ENCODE measurements at regions of chr6 and their contacts with region 1.

Region 1: DNA sequence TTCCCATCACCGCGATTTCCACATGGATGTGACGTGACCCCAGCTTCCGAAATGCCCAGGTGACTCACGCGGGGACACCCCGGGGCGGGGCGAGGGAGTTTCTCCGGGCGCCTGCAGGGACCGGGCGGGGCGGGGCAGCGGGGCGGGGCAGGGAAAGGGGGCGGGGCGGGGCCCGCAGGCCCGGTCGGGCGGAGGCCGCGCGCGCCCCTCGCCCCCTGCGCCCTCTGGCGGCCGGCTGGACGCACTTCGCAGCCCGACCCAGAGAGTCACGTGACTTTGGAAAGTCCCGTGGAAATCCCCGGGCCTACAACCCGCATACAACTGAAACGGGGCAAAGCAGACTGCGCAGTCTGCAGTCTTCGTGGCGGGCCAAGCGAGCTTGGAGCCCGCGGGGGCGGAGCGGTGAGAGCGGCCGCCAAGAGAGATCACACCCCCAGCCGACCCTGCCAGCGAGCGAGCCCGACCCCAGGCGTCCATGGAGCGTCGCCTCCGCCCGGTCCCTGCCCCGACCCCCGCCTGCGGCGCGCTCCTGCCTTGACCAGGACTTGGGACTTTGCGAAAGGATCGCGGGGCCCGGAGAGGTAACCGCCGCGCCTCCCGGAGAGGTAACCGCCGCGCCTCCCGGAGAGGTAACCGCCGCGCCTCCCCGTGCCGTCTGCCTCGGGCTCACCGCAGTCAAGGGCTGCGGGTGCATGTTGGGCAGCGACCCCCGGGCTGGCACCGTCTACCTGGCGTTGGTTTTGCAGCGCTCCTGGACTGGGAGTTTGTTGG is at the start of gene TNFAIP3:
- DNase-seq: peak; percentile 79 to 97
- H3K4me3 ChIP-seq: peak within 1 kb of the TSS; percentile 90 to 93
- H3K27ac ChIP-seq: peak within 1 kb of the TSS; percentile 82 to 89
- H3K4me1 ChIP-seq: peaks cover 0 to 13% of the 10 kb centered on the region in 2 donors
- H3K27me3 ChIP-seq: no peaks in the 10 kb centered on the region
- CTCF ChIP-seq: peak; percentile 48 to 90 (median 59)
- total RNA-seq, gene TNFAIP3: 24.5 TPM

Region 2: GRCh38 chr6:137218917-137219663 is 648.0 kb before region 1 on chr6 and contains the start of gene IFNGR1:
- intact Hi-C with region 1: loop called (anchors 5 kb)
- DNase-seq: peak; percentile 82 to 98
- H3K4me3 ChIP-seq: peak within 1 kb of the TSS; percentile 87 to 93
- H3K27ac ChIP-seq: peak within 1 kb of the TSS; percentile 99
- H3K4me1 ChIP-seq: peaks cover 6 to 46% of the 10 kb centered on the region in 2 donors
- H3K27me3 ChIP-seq: no peaks in the 10 kb centered on the region
- CTCF ChIP-seq: peak in 1 of 3 experiments; percentile 2
- total RNA-seq, gene IFNGR1: 47.7 TPM

Region 3: GRCh38 chr6:137625796-137626195 is 241.3 kb before region 1 on chr6:
- intact Hi-C with region 1: no loop called
- DNase-seq: no peak
- H3K4me3 ChIP-seq: no peak overlapping the region
- H3K27ac ChIP-seq: no peak overlapping the region
- H3K4me1 ChIP-seq: no peaks in the 10 kb centered on the region
- H3K27me3 ChIP-seq: no peaks in the 10 kb centered on the region
- CTCF ChIP-seq: no peak

Region 4: GRCh38 chr6:137927777-137928218 is 60.7 kb after region 1 on chr6:
- intact Hi-C with region 1: loop called (anchors 2 kb)
- DNase-seq: no peak
- H3K4me3 ChIP-seq: no peak overlapping the region
- H3K27ac ChIP-seq: no peak overlapping the region
- H3K4me1 ChIP-seq: peaks cover 0 to 15% of the 10 kb centered on the region in 2 donors
- H3K27me3 ChIP-seq: no peaks in the 10 kb centered on the region
- CTCF ChIP-seq: no peak

Region 5: GRCh38 chr6:138109042-138109997 is 242.2 kb after region 1 on chr6:
- intact Hi-C with region 1: loop called (anchors 5 kb)
- DNase-seq: peak in 1 of 2 donors; percentile 85
- H3K4me3 ChIP-seq: peak overlapping the region in 1 of 2 donors; percentile 18
- H3K27ac ChIP-seq: peak overlapping the region in 1 of 2 donors; percentile 34
- H3K4me1 ChIP-seq: no peaks in the 10 kb centered on the region
- H3K27me3 ChIP-seq: no peaks in the 10 kb centered on the region
- CTCF ChIP-seq: peak; percentile 72 to 97 (median 95)

Region 6: DNA sequence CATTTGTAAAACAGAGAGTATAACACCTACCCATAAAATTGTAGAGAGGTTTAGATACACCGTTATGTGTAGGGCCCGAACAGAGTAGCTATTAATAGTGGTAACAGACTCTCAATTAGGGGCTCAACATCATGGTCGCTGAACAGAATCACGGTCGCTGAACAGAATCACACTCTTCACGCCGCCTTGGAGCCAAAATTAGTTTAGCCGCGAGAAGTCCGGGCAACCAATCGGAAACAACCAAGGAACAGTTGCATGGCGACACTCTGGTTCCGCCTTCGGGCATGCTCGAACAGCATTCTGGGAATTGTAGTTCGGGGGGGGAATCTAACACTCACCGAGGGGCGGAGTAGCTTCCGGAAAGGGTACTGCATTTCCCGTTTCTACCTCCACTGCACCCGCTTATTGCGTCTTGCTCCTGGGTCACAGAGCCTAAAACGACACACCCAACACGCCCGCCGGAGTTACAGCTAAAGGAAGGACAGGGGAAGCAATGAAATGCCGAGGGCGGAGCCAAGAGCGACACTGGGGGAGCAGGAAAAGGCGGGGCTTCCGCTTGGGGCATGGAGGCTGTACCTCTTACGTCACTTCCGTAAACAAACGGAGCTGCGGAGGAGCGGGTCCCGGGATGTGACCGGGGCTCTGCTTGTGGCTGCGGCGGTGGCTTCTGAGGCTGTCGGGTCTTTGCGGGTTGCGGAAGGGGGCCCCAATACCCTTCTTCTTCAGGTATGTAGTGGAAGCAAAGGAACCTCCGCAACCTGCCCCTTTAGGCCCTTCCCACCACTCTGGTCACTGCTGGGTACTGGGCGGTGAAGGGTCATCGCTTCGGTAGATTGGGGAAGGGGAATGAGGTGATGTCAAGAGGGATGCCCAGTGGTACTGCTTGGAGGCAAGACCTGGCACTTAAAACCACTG is 906.3 kb after region 1 on chr6 and contains the start of gene CCDC28A:
- intact Hi-C with region 1: loop called (anchors 5 kb)
- DNase-seq: peak; percentile 81 to 97
- H3K4me3 ChIP-seq: peak within 1 kb of the TSS; percentile 67 to 92
- H3K27ac ChIP-seq: peak within 1 kb of the TSS; percentile 84 to 96
- H3K4me1 ChIP-seq: peaks cover 0 to 17% of the 10 kb centered on the region in 2 donors
- H3K27me3 ChIP-seq: no peaks in the 10 kb centered on the region
- CTCF ChIP-seq: no peak
- total RNA-seq, gene CCDC28A: 0.32 TPM